ENCODE measurements at regions of chr11 and their contacts with region 1.

Region 1: GRCh38 chr11:71364176-71364671 is 84.0 kb downstream of the DHCR7 start:
- DNase-seq: no peak
- H3K4me3 ChIP-seq: no peak overlapping the region
- H3K27ac ChIP-seq: no peak overlapping the region
- H3K4me1 ChIP-seq: no peaks in the 10 kb centered on the region
- H3K27me3 ChIP-seq: no peaks in the 10 kb centered on the region
- CTCF ChIP-seq: no peak

Region 2: DNA sequence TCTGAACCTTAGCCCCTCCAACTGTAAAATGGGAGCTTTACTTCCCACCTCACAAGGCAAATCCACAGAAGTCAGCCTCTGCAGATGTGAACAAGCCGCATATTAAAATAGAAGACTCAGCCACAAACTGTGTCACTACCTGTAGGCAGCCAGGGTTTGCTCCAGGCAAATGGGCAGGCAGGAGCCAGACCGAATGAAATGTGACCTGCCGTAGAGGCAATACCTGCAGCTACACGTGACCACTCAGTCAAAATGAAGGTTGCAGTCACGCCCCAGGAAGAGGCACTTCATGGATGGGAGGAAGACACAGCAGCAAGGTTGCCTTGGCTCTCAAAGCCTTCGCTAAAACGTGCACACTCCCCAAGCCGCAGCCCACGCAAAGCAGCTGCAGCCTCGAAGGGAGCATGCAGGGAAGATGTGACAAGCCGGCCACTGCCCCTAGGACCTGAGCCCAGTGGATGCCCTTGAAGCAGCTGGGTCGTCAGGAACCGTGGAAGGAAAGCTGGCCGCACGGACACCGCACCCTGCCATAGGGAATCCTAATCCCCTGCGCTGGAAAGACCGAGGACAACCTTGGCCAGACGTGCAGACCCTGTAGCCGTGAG is 164.9 kb before region 1 on chr11:
- CTCF ChIA-PET with region 1: no interaction called
- dilution Hi-C with region 1: loop called (anchors 10 kb)
- in situ Hi-C with region 1: no loop called
- intact Hi-C with region 1: no loop called
- DNase-seq: no peak
- H3K4me3 ChIP-seq: no peak overlapping the region
- H3K27ac ChIP-seq: no peak overlapping the region
- H3K4me1 ChIP-seq: no peaks in the 10 kb centered on the region
- H3K27me3 ChIP-seq: no peaks in the 10 kb centered on the region
- CTCF ChIP-seq: no peak

Region 3: GRCh38 chr11:71454470-71455469 is 90.5 kb after region 1 on chr11:
- CTCF ChIA-PET with region 1: no interaction called
- dilution Hi-C with region 1: loop called (anchors 5 kb)
- in situ Hi-C with region 1: no loop called
- intact Hi-C with region 1: no loop called
- DNase-seq: no peak
- H3K4me3 ChIP-seq: no peak overlapping the region
- H3K27ac ChIP-seq: no peak overlapping the region
- H3K4me1 ChIP-seq: peaks cover 30% of the 10 kb centered on the region
- H3K27me3 ChIP-seq: no peaks in the 10 kb centered on the region
- CTCF ChIP-seq: peak; percentile 19 to 45

Measured in mammary epithelial cell (primary cell).